HEK293 (cell line): ENCODE measurements at regions of chr6 and their contacts with region 1.

Region 1: GRCh38 chr6:107674995-107675738 is 148.9 kb downstream of the SCML4 start:
- H3K4me3 ChIP-seq: peak overlapping the region; percentile 28
- H3K27ac ChIP-seq: peak overlapping the region; percentile 1; the same call in 1 of the 2 replicates
- H3K4me1 ChIP-seq: 0 out of 2 replicates have a peak, but pooled peaks cover 4% of the 10 kb centered on the region
- CTCF ChIP-seq: peak; percentile 99

Region 2: DNA sequence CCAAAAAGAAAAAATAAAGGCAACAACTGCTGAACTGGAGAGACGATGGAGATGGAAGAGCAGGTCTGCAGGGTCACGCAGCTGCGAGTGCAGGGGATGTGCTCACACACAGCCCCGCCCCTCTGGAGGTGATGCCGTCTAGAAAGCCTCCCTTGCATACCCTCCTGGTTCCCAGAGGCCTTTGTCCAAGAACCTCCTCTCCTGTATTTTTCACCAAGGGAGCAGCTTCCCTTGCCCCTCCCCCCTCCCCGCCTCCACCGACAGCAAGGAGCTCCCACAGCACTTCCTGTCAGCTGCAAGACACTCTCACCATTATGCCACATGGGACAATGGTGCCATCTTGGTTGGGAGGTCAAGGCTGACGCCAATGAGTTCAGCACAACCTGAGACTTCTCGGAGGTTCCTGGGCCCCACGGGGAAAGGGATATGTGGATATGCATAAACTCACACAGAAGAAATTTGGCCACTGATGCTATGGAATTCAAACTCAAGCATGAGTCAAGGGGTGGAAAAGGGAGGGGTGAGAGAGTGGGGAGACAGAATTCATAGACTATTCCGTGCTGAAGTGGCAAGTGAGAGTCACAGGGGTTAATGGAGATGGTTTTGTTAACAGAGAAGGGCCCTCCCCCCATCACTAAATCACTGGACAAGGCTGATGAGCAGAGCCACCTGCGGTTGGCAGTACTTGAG is 16.0 kb after region 1 on chr6:
- CTCF ChIA-PET with region 1: interaction called, 8 read pairs
- POLR2A ChIA-PET with region 1: interaction called, 11 read pairs
- H3K4me3 ChIP-seq: no peak overlapping the region
- H3K27ac ChIP-seq: no peak overlapping the region
- H3K4me1 ChIP-seq: 0 out of 2 replicates have a peak, but pooled peaks cover 2% of the 10 kb centered on the region
- CTCF ChIP-seq: no peak

Region 3: GRCh38 chr6:107704347-107705013 is 29.3 kb after region 1 on chr6:
- CTCF ChIA-PET with region 1: interaction called, 26 read pairs
- POLR2A ChIA-PET with region 1: no interaction called
- H3K4me3 ChIP-seq: no peak overlapping the region
- H3K27ac ChIP-seq: no peak overlapping the region
- H3K4me1 ChIP-seq: no peaks in the 10 kb centered on the region
- CTCF ChIP-seq: 0 out of 2 replicates have a peak, but pooled peaks have one; percentile 21

Region 4: DNA sequence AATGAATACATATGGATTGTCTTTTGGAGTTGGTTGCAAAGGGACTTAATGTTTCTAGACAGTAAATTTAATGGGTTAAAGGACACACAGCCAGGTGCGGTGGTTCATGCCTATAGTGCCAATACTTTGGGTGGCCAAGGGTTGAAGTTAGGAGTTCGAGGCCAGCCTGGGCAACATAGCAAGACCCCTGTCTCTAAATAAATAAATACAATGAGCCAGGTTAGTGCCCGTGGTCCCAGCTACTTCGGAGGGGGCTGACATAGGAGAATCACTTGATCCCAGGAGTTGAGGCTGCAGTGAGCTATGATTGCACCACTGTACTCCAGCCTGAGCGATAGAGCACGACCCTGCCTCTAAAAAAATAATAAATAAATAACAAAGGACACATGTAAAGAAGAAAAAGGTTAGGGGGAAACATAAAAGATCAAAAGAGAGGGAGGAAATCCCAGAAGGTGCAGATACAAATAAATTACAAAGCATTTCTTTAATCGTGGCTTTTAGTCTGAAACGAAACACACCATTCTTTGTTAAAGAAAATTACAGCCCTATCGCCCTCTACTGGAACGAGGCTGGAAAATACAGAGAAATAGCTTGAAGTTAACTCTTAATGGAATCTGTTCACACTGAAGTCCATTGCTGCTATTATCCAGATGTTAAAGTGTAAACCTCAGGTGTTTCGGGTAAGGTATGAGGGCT is 191.6 kb after region 1 on chr6:
- CTCF ChIA-PET with region 1: interaction called, 18 read pairs
- POLR2A ChIA-PET with region 1: interaction called, 3 read pairs
- H3K4me3 ChIP-seq: no peak overlapping the region
- H3K27ac ChIP-seq: no peak overlapping the region
- H3K4me1 ChIP-seq: no peaks in the 10 kb centered on the region
- CTCF ChIP-seq: peak; percentile 33; the same call in 1 of the 2 replicates

Region 5: DNA sequence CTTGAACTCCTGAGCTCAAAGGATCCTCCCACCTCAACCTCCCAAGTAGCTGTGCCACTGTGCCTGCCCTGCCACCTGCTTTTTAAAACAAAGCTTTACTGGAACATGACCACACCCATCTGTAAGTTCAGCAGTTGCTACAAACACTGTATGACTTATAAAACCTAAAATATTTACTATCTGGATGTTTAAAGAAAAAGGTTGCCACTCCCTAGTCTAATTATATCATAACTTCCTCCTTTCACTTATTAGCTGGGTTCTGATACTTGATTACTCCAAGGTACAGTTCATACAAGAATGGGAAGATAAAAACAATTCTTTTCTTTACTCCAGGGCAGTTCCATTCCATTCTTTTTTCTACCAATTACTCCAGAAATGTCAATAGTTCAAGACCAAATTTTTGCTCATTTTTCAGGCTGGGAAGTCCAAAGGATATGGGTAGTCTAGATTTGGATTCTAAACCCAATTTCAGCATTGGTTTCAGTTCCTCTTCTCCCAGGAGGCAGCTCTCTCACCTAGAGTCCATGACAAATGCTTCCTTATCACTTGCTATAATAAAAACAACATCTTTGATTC is 219.7 kb after region 1 on chr6:
- CTCF ChIA-PET with region 1: no interaction called
- POLR2A ChIA-PET with region 1: no interaction called
- H3K4me3 ChIP-seq: no peak overlapping the region
- H3K27ac ChIP-seq: no peak overlapping the region
- H3K4me1 ChIP-seq: no peaks in the 10 kb centered on the region
- CTCF ChIP-seq: no peak